CD4-positive, alpha-beta memory T cell (primary cell): ENCODE measurements at regions of chr20 and their contacts with region 1.

Region 1: GRCh38 chr20:36591854-36592641 is 13.5 kb upstream of the RAB5IF start:
- DNase-seq: peak; percentile 51 to 87 (median 63)
- H3K4me3 ChIP-seq: no peak overlapping the region
- H3K4me3 Mint-ChIP-seq: peak overlapping the region in 7 of 8 donors; percentile 26 to 77 (median 57)
- H3K27ac ChIP-seq: peak overlapping the region; percentile 38
- H3K27ac Mint-ChIP-seq: peak overlapping the region; percentile 77 to 93 (median 86)
- H3K4me1 ChIP-seq: peaks cover 51% of the 10 kb centered on the region
- H3K4me1 Mint-ChIP-seq: peaks cover 29 to 64% (median 44%) of the 10 kb centered on the region in 4 donors
- H3K27me3 ChIP-seq: no peaks in the 10 kb centered on the region
- H3K27me3 Mint-ChIP-seq: no peaks in the 10 kb centered on the region

Region 2: DNA sequence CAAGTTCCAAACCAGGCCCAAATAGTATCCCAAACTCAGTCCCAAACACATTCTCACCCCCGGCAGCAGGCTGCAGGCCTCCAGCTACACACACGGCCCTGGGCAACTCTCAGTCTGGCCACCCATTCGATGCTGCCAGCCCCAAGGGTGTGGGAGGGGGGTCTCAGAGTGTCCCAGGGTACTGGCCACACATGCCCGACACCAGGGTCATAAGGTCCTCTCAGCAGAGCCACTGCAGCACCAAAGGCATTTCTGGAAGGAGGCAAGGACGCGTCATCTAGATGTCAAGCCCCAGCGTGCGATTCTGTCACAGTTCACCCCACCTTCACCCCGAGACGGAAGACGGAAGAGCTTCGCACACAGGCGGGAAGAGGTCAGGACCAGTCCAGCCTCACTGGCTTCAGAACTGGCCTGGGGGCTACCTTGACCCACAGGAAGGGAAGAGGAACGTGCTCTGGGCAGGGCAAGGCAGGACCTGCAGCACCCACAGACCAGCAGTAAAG is 41.2 kb before region 1 on chr20:
- CTCF ChIA-PET with region 1: interaction called, 5 read pairs
- POLR2A ChIA-PET with region 1: no interaction called
- intact Hi-C with region 1: loop called (anchors 2 kb)
- DNase-seq: no peak
- H3K4me3 ChIP-seq: no peak overlapping the region
- H3K4me3 Mint-ChIP-seq: no peak overlapping the region
- H3K27ac ChIP-seq: no peak overlapping the region
- H3K27ac Mint-ChIP-seq: no peak overlapping the region
- H3K4me1 ChIP-seq: no peaks in the 10 kb centered on the region
- H3K4me1 Mint-ChIP-seq: peaks cover 0 to 7% (median under 1%) of the 10 kb centered on the region in 4 donors
- H3K27me3 ChIP-seq: no peaks in the 10 kb centered on the region
- H3K27me3 Mint-ChIP-seq: no peaks in the 10 kb centered on the region